GM13976 (cell line): ENCODE measurements at regions of chr9 and their contacts with region 1.

Region 1: GRCh38 chr9:93962561-93963440 is 7.6 kb upstream of the BARX1 start:
- DNase-seq: peak; percentile 84
- CTCF ChIP-seq: peak; percentile 83

Region 2: GRCh38 chr9:93682232-93682968 is 280.4 kb before region 1 on chr9:
- in situ Hi-C with region 1: loop called (anchors 25 kb)
- DNase-seq: peak; percentile 86
- CTCF ChIP-seq: peak; percentile 67